A673 (cell line): ENCODE measurements at regions of chr2 and their contacts with region 1.

Region 1: GRCh38 chr2:172905937-172906811 is 169.5 kb upstream of the MAP3K20 start:
- DNase-seq: no peak
- H3K4me3 ChIP-seq: no peak overlapping the region
- H3K27ac ChIP-seq: no peak overlapping the region
- H3K4me1 ChIP-seq: no peaks in the 10 kb centered on the region
- H3K27me3 ChIP-seq: peaks cover 6% of the 10 kb centered on the region
- CTCF ChIP-seq: no peak

Region 2: DNA sequence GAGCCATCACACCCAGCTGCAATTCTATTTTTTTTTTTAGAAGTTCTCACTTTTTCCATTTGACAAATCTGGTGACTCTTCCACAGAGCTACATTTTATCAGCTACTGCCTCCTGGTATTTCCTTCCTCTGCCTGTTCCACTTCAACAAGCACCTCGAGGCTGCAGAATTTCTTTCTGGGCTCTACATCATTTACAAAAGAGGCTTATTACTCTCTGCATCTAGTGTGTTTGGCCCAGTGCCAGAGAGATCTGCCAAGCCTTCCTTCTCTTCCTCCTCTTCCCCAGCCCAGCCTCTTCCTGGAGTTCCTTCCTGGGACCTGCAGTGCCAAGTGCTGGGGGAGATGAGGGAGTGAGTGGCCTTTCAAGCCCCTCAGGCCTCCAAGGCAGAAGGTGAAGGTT is 598.4 kb before region 1 on chr2:
- CTCF ChIA-PET with region 1: no interaction called
- POLR2A ChIA-PET with region 1: no interaction called
- intact Hi-C with region 1: no loop called
- DNase-seq: peak; percentile 19
- H3K4me3 ChIP-seq: no peak overlapping the region
- H3K27ac ChIP-seq: no peak overlapping the region
- H3K4me1 ChIP-seq: no peaks in the 10 kb centered on the region
- H3K27me3 ChIP-seq: no peaks in the 10 kb centered on the region
- CTCF ChIP-seq: no peak

Region 3: DNA sequence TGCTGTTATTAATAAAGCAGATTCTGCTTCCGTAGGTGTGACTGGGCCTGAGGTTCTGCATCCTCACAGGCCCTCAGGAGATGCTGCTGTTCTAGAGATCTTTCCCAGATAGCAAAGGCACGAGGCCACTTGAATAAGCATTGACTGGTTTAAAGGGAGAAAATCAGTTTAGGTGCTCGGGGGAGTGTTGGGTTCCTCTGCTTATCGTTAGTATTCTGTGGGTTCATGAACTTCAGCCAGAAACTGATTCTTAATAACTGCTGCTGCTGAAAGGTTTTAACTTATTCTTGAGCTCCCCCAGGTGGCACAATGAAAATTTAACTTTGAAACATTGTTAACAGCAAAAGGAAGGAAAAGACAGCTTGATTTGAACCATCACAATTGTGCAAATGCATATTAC is 421.9 kb before region 1 on chr2:
- CTCF ChIA-PET with region 1: no interaction called
- POLR2A ChIA-PET with region 1: no interaction called
- intact Hi-C with region 1: no loop called
- DNase-seq: peak; percentile 37
- H3K4me3 ChIP-seq: no peak overlapping the region
- H3K27ac ChIP-seq: no peak overlapping the region
- H3K4me1 ChIP-seq: no peaks in the 10 kb centered on the region
- H3K27me3 ChIP-seq: no peaks in the 10 kb centered on the region
- CTCF ChIP-seq: peak; percentile 49

Region 4: GRCh38 chr2:173151671-173152398 is 245.7 kb after region 1 on chr2:
- CTCF ChIA-PET with region 1: no interaction called
- POLR2A ChIA-PET with region 1: interaction called, 10 read pairs
- intact Hi-C with region 1: no loop called
- DNase-seq: peak; percentile 91
- H3K4me3 ChIP-seq: no peak overlapping the region
- H3K27ac ChIP-seq: peak overlapping the region; percentile 43
- H3K4me1 ChIP-seq: peaks cover 36% of the 10 kb centered on the region
- H3K27me3 ChIP-seq: no peaks in the 10 kb centered on the region
- CTCF ChIP-seq: no peak